Psoas muscle (tissue), 8 donors: ENCODE measurements at regions of chr19 and their contacts with region 1.

Region 1: GRCh38 chr19:18683213-18683939 is at the start of gene CRTC1:
- DNase-seq: peak; percentile 88 to 96
- ATAC-seq: peak; percentile 85 to 92 (median 88)
- H3K4me3 ChIP-seq: peak within 1 kb of the TSS; percentile 71
- H3K27ac ChIP-seq: peak within 1 kb of the TSS; percentile 88
- H3K4me1 ChIP-seq: peaks cover 18% of the 10 kb centered on the region
- H3K27me3 ChIP-seq: no peaks in the 10 kb centered on the region
- CTCF ChIP-seq: no peak
- total RNA-seq, gene CRTC1: 8.1 to 12.5 (median 9.6) TPM

Region 2: DNA sequence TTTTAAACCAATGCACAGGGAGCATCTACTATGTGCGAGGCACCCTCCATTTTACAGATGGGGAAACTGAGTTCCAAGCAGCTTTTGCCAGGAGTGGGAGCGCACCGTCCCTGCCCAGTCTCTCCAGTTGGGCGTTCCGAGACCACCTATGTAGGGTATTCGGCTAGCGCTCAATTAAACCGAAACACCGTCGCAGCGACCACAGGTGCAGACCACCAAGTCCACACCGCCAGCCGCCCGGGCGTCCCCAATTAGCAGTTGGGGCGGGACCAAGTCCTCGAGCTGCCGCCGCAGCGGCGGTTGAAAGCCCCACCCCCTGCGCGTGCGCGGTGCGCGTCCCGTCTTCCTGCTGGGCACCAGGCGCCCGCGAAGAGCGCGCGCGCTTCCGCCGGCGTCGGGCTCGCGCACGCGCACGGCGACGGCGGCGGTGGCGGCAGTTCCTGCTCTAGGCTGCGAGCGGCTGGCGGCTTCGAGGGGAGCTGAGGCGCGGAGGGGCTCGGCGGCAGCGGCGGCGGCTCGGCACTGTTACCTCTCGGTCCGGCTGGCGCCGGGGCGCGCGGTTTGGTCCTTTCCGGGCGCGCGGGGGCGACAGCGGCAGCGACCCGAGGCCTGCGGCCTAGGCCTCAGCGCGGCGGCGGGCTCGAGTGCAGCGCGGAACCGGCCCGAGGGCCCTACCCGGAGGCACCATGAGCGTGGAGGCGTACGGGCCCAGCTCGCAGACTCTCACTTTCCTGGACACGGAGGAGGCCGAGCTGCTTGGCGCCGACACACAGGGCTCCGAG is 148.3 kb after region 1 on chr19 and contains the start of gene UPF1:
- intact Hi-C with region 1: loop called in 1 of 2 experiments (anchors 10 kb)
- DNase-seq: peak; percentile 95 to 98
- ATAC-seq: peak; percentile 93 to 96 (median 94)
- H3K4me3 ChIP-seq: peak within 1 kb of the TSS; percentile 97
- H3K27ac ChIP-seq: peak within 1 kb of the TSS; percentile 93
- H3K4me1 ChIP-seq: peaks cover 28% of the 10 kb centered on the region
- H3K27me3 ChIP-seq: no peaks in the 10 kb centered on the region
- CTCF ChIP-seq: no peak
- total RNA-seq, gene UPF1: 34.6 to 45.0 (median 37.9) TPM